Activated CD4-positive, alpha-beta T cell treated with anti-CD3 and anti-CD28 coated beads, Interleukin-2, amount 10 ng/mL, durations not matched to agents 7 days and 5 days (primary cell): ENCODE measurements at regions of chr4 and their contacts with region 1.

Region 1: GRCh38 chr4:136438645-136439044 is 1093.6 kb downstream of the PCDH18 start:
- DNase-seq: no peak
- H3K4me3 Mint-ChIP-seq: no peak overlapping the region
- H3K27ac Mint-ChIP-seq: no peak overlapping the region
- H3K4me1 Mint-ChIP-seq: no peaks in the 10 kb centered on the region
- H3K27me3 Mint-ChIP-seq: no peaks in the 10 kb centered on the region

Region 2: GRCh38 chr4:136412708-136413107 is 25.9 kb before region 1 on chr4:
- CTCF ChIA-PET with region 1: no interaction called
- POLR2A ChIA-PET with region 1: no interaction called
- DNase-seq: no peak
- H3K4me3 Mint-ChIP-seq: no peak overlapping the region
- H3K27ac Mint-ChIP-seq: no peak overlapping the region
- H3K4me1 Mint-ChIP-seq: no peaks in the 10 kb centered on the region
- H3K27me3 Mint-ChIP-seq: no peaks in the 10 kb centered on the region

Region 3: GRCh38 chr4:136489101-136489500 is 50.5 kb after region 1 on chr4:
- CTCF ChIA-PET with region 1: no interaction called
- POLR2A ChIA-PET with region 1: interaction called, 15 read pairs
- DNase-seq: no peak
- H3K4me3 Mint-ChIP-seq: no peak overlapping the region
- H3K27ac Mint-ChIP-seq: no peak overlapping the region
- H3K4me1 Mint-ChIP-seq: no peaks in the 10 kb centered on the region
- H3K27me3 Mint-ChIP-seq: no peaks in the 10 kb centered on the region